ENCODE measurements at regions of chr15 and their contacts with region 1.

Region 1: GRCh38 chr15:97909291-97909891 is 51.1 kb upstream of the ARRDC4 start:
- DNase-seq: peak; percentile 48 to 77
- H3K4me3 ChIP-seq: no peak overlapping the region
- H3K27ac ChIP-seq: no peak overlapping the region
- H3K4me1 ChIP-seq: peaks cover 0 to under 1% (median under 1%) of the 10 kb centered on the region in 4 donors
- H3K27me3 ChIP-seq: peaks cover 0 to 28% of the 10 kb centered on the region in 2 donors
- CTCF ChIP-seq: peak; percentile 80 to 92

Region 2: DNA sequence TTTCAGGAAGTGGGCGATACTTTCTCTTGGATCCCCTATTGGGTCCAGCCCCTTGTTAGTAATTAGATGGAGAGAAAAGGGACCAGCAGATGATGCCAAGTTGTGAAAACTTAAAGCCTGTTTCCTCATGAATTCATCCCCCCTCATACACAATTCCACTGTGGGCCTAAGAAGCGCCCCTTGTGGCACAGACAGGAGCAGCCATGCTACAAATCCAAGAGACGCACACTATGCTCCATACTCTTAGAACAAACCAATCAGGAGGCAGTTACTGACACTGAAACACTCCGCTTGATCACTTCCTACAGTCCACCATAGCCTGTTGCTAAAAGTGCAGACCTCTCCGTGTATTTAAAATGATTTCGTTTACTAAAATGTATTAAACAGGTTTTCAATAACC is 60.2 kb before region 1 on chr15:
- intact Hi-C with region 1: no loop called
- DNase-seq: no peak
- H3K4me3 ChIP-seq: no peak overlapping the region
- H3K27ac ChIP-seq: no peak overlapping the region
- H3K4me1 ChIP-seq: no peaks in the 10 kb centered on the region
- H3K27me3 ChIP-seq: no peaks in the 10 kb centered on the region
- CTCF ChIP-seq: no peak

Region 3: DNA sequence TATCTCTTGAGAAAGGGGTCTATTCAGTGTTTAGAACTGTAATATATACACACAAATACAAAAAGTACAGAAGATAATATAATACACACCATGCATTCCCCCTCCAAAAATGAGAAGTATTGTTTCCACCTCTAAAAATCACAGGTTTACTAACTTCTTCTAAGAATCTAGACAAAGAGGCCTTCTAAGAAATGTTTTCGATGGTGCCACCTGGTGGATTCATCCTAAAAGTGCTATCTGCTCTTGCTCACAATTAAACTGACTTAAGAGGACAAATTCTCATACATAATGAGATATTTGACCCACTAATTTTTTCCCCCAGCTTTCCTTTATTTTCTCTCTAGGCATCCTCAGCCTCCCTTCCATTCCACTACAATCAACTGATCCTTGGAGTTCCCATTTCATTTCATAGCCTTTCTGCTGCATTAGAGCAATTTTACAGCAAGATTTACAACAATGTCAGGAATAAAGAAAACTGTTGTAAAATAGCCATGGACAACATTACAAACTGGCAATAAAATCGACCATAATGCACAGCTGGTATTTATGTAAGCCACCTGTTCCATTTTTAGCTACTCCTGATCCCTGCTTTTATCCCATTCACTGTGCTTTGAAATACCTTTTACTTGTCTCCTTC is 175.7 kb after region 1 on chr15:
- intact Hi-C with region 1: loop called (anchors 2 kb)
- DNase-seq: peak in 1 of 2 donors; percentile 41
- H3K4me3 ChIP-seq: no peak overlapping the region
- H3K27ac ChIP-seq: no peak overlapping the region
- H3K4me1 ChIP-seq: no peaks in the 10 kb centered on the region
- H3K27me3 ChIP-seq: no peaks in the 10 kb centered on the region
- CTCF ChIP-seq: peak; percentile 70 to 81

Region 4: DNA sequence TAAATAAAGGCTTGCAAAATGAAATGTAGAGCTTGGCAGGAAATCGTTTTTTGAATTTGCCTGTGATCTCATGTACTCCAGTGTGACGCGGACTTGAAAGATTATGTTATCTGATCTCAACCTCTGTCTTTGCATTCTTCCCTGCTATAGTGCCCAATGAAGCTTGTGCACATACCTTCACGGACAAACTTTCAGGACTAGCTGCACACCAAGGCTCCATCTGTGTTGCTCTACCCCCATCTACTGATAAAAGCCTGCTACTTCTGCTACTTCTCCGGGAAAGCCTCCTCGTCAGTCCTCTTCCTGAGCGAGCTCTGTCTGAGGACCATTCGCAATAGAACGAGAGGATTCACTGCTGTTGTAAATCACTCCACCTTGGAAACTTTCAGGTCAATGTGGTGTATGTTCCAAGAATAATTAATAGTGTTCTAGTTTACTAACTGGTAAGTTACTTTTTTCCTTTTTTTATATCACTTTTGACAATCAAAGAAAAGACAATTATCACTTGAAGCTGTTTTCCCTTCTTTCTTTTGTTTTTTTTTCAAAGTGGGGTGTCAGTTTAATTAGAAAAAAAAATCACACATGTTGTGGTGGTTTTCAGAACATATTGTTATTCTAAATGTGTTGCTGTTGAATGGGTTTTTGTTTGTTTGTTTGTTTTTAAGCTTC is 268.7 kb after region 1 on chr15:
- intact Hi-C with region 1: loop called (anchors 5 kb)
- DNase-seq: no peak
- H3K4me3 ChIP-seq: no peak overlapping the region
- H3K27ac ChIP-seq: no peak overlapping the region
- H3K4me1 ChIP-seq: no peaks in the 10 kb centered on the region
- H3K27me3 ChIP-seq: peaks cover 0 to 10% of the 10 kb centered on the region in 2 donors
- CTCF ChIP-seq: peak; percentile 60 to 64

Region 5: DNA sequence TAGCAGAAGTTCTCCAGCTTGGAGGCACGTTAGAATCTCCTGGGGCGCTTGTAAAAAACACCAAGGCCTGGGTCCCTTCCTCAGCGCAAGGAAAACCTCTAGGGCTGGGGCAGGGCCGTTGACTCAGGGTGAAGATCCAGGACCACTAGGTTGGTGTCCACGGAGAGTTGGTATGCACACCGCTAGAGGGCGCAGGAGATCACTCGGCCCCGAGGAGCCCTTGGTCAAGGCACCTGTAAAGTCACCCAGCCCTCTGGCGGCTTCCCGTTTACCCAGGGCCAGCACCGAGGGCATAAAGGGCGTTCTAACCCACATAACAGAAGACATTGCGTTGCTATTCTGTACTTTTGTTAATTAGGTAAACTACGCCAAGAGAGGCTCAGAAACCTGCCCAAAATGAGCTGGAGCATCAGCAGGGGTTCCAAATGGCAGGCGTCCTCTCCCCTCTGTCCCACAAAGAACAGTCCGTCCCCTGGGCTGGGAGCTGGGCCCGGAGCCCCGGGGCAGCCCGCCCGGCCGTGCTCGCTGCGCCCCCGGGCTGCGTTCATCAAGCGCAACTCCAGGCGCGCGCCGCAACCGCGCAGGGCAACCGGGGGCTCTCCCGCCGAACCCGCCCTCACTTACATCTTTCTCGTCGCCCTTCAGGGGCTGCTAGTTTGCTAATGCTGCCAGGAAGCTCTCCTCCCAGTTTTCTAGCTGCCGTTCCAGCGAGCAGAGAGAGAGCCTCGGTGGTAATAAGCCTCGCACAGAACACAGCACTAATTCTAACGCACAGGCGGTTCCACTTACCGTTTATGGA is 383.2 kb after region 1 on chr15:
- intact Hi-C with region 1: loop called (anchors 10 kb)
- DNase-seq: peak in 1 of 2 donors; percentile 27
- H3K4me3 ChIP-seq: no peak overlapping the region
- H3K27ac ChIP-seq: no peak overlapping the region
- H3K4me1 ChIP-seq: peaks cover 0 to 9% (median 4%) of the 10 kb centered on the region in 4 donors
- H3K27me3 ChIP-seq: peaks cover 0 to 53% of the 10 kb centered on the region in 2 donors
- CTCF ChIP-seq: peak; percentile 34 to 43

Region 6: DNA sequence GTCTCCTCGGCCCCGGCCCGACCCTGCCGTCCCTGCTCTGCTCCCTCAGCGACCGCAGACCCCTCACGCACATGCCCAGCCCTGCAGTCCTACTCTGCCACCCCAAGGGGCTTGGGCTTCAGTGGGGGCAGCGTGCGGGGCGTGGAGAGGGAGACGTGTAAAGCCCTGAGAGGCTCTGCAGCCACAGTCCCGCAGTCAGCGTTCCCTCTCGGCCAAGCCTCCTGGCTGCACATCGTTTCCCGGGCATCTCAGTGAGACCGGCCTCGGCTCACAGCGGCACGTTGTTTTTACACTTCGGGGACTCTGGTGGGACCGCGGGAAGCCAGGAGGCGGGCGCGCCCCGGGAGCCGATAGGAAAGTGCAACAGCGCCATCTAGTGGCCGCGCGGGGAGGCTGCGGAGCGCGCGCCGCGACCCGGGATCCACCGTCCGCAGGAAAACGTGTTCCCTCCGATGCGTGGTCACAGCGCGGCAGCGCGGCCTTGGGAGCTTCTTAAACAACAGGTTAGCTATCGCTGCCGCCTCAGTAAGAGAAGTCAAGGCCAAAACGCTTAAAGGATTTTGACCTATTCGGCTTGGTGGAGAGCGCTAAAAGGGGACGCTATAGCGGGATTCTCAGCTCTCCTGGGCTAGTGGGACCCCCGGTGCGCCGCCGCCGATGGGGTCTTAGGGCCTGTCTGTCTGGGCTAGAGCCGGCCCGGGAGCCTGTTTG is 512.2 kb after region 1 on chr15:
- intact Hi-C with region 1: loop called (anchors 5 kb)
- DNase-seq: peak; percentile 70 to 73
- H3K4me3 ChIP-seq: peak overlapping the region; percentile 42 to 53
- H3K27ac ChIP-seq: peak overlapping the region in 1 of 2 donors; percentile 38
- H3K4me1 ChIP-seq: peaks cover 0 to 22% (median 11%) of the 10 kb centered on the region in 4 donors
- H3K27me3 ChIP-seq: peaks cover 0 to 41% of the 10 kb centered on the region in 2 donors
- CTCF ChIP-seq: peak; percentile 97 to 99